ENCODE measurements at regions of chr5 and their contacts with region 1.

Region 1: GRCh38 chr5:9348401-9348996 is 197.4 kb downstream of the SEMA5A start:
- DNase-seq: peak; percentile 77
- H3K4me3 ChIP-seq: no peak overlapping the region
- H3K27ac ChIP-seq: peak overlapping the region; percentile 68
- H3K4me1 ChIP-seq: peaks cover 33% of the 10 kb centered on the region
- H3K27me3 ChIP-seq: no peaks in the 10 kb centered on the region
- CTCF ChIP-seq: no peak

Region 2: GRCh38 chr5:9233712-9234111 is 114.8 kb before region 1 on chr5:
- CTCF ChIA-PET with region 1: no interaction called
- dilution Hi-C with region 1: no loop called
- in situ Hi-C with region 1: no loop called
- intact Hi-C with region 1: loop called (anchors 10 kb)
- DNase-seq: no peak
- H3K4me3 ChIP-seq: no peak overlapping the region
- H3K27ac ChIP-seq: no peak overlapping the region
- H3K4me1 ChIP-seq: no peaks in the 10 kb centered on the region
- H3K27me3 ChIP-seq: no peaks in the 10 kb centered on the region
- CTCF ChIP-seq: no peak